Right cardiac atrium (tissue), 5 donors: ENCODE measurements at regions of chr3 and their contacts with region 1.

Region 1: GRCh38 chr3:192444096-192444790 is 283.1 kb downstream of the FGF12 start:
- DNase-seq: peak; percentile 47 to 80 (median 74)
- ATAC-seq: peak; percentile 77 to 82
- H3K4me3 ChIP-seq: no peak overlapping the region
- H3K27ac ChIP-seq: no peak overlapping the region
- H3K4me1 ChIP-seq: no peaks in the 10 kb centered on the region
- H3K27me3 ChIP-seq: no peaks in the 10 kb centered on the region

Region 2: DNA sequence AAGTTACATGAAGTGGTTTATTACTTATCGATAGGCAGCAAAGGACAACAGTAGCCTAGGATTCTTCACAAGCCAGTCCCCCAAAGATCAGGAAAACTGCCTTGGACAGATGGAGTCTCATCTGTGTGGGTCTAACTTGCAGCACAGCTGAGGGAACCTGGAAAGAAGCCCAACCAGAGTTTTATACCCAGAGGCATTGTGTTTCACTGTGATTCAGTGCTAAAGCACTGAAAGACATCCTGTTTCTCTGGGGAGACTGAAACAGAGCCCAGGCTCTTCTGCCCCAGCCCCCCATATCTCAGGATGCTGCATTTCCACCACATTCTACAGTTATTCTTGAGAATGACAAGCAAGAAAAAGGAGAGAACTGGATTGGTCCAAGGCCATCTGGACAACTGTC is 1031.5 kb before region 1 on chr3:
- intact Hi-C with region 1: loop called in 3 of 4 experiments (anchors 5 to 10 kb)
- DNase-seq: no peak
- ATAC-seq: no peak
- H3K4me3 ChIP-seq: no peak overlapping the region
- H3K27ac ChIP-seq: no peak overlapping the region
- H3K4me1 ChIP-seq: no peaks in the 10 kb centered on the region
- H3K27me3 ChIP-seq: no peaks in the 10 kb centered on the region

Region 3: GRCh38 chr3:192130534-192131132 is 313.6 kb before region 1 on chr3:
- intact Hi-C with region 1: loop called in 3 of 4 experiments (anchors 2 to 5 kb)
- DNase-seq: peak; percentile 32 to 62 (median 36)
- ATAC-seq: peak; percentile 81 to 84
- H3K4me3 ChIP-seq: no peak overlapping the region
- H3K27ac ChIP-seq: no peak overlapping the region
- H3K4me1 ChIP-seq: no peaks in the 10 kb centered on the region
- H3K27me3 ChIP-seq: no peaks in the 10 kb centered on the region

Region 4: DNA sequence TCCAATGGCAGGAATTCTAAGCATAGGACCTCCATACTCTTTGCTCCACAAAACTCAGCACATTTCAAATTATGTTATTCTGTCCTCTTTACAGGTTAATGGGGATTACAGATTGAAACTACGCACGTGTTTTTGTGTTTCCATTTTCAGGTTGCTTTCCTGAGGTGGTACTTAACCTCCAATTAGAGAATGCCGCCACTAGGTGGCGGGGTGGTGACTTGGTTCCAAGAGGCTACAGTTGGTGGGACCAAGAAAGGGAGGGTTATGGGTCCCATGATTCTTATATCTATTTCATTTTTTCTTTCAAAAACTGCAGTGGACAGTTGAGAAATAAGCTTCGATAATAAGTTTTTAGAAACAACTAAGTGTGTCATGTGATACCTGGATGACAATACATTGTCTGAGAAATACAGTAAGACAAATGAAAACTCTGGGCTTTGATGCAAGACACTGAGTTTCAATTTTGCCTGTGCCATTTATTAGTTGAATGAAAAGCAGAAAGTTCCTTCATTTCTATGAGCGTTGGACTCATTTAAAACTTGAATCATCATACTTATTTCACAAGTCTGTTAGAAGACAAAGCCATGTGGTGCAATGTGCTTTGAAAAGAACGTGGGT is 255.9 kb before region 1 on chr3:
- intact Hi-C with region 1: loop called in 1 of 4 experiments (anchors 5 kb)
- DNase-seq: peak; percentile 55 to 81 (median 71)
- ATAC-seq: peak; percentile 50 to 61
- H3K4me3 ChIP-seq: no peak overlapping the region
- H3K27ac ChIP-seq: no peak overlapping the region
- H3K4me1 ChIP-seq: no peaks in the 10 kb centered on the region
- H3K27me3 ChIP-seq: no peaks in the 10 kb centered on the region

Region 5: DNA sequence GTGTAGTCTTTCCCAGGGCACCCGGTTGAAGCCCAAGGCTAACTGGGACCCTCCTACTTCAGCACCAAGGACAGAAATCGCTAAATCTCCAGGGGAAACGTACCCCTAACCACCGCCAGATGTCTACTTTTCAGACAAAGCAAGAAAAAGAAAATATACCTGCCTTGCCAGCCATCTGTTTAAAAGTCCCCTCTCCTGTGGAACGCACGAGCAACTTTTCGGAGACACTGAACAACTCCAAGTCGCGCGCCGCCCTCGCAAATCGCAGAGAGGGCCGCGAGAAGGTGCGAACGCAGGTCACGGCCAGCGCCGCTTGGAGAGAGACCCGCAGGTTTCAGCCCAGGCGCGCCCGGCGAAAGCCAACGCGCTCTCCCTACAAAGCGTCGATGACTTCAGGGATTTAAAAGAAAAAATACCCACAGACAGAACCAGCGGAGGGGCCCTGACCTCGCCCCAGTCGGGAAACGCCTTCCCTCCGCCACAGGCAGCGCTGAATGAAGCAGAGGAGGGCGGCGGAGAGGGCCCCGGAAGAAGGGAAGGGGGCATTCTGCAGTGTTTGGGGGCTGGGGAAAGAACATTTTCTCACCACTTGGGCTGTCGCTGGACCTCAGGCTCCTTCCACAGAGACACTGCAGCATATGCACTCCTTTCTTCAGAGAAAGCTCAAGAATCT is 70.0 kb after region 1 on chr3:
- intact Hi-C with region 1: no loop called
- DNase-seq: no peak
- ATAC-seq: peak in 1 of 2 donors; percentile 17
- H3K4me3 ChIP-seq: peak overlapping the region; percentile 51
- H3K27ac ChIP-seq: no peak overlapping the region
- H3K4me1 ChIP-seq: peaks cover 6% of the 10 kb centered on the region
- H3K27me3 ChIP-seq: no peaks in the 10 kb centered on the region